Activated naive CD4-positive, alpha-beta T cell treated with anti-CD3 and anti-CD28 coated beads, Interleukin-2, amount 10 ng/mL, durations not matched to agents 7 days and 5 days (primary cell): ENCODE measurements at regions of chr17 and their contacts with region 1.

Region 1: GRCh38 chr17:48024937-48025906 is 12.4 kb downstream of the COPZ2 start:
- DNase-seq: peak; percentile 98
- H3K4me3 Mint-ChIP-seq: peak overlapping the region; percentile 81
- H3K27ac Mint-ChIP-seq: peak overlapping the region; percentile 89
- H3K4me1 Mint-ChIP-seq: peaks cover 42% of the 10 kb centered on the region
- H3K27me3 Mint-ChIP-seq: peaks cover 81% of the 10 kb centered on the region

Region 2: DNA sequence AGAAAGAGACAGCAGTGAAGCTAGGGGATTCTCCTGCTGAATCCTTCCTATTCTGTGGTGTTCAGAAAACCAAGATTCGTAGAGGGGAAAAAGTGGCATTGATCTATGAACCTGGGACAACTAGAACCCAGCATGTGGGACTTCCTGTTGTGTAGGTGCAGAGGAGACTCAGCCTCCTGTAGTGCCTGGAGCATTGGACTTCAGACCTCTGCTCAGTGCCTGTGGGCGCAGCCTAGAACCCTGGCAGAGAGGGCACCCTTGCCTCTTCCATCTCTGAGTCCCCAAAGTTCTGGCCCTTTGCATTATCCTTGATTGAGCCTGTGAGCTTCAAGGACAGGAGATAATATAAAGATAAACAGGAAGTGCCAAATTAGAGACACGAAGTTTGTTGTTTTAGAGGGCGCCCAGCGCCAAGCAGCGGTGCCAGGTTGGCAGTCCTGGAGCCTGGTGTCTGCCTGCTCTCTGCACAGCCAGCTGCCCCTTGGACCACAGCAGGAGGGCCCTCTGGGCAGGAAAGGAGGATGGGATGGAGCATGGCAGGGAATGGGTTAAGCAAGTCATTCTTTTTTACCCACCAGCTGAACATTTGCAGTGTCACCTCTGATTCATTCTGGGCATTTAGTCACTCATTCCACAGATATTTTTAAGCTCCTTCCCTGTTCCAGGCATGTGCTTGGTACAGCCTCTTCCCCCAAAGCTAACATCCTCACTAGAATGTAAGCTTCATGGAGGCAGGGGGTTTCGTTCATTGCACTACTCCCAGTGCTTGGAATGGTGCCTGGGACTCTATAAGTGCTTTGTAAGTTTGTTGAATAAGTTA is 162.4 kb before region 1 on chr17:
- CTCF ChIA-PET with region 1: no interaction called
- DNase-seq: no peak
- H3K4me3 Mint-ChIP-seq: no peak overlapping the region
- H3K27ac Mint-ChIP-seq: no peak overlapping the region
- H3K4me1 Mint-ChIP-seq: peaks cover 32% of the 10 kb centered on the region
- H3K27me3 Mint-ChIP-seq: peaks cover 63% of the 10 kb centered on the region

Region 3: GRCh38 chr17:47978324-47978723 is 46.9 kb before region 1 on chr17:
- CTCF ChIA-PET with region 1: interaction called, 15 read pairs
- DNase-seq: peak; percentile 69
- H3K4me3 Mint-ChIP-seq: no peak overlapping the region
- H3K27ac Mint-ChIP-seq: no peak overlapping the region
- H3K4me1 Mint-ChIP-seq: peaks cover 9% of the 10 kb centered on the region
- H3K27me3 Mint-ChIP-seq: no peaks in the 10 kb centered on the region

Region 4: GRCh38 chr17:48037036-48037837 is 12.0 kb after region 1 on chr17 and contains the start of gene COPZ2:
- CTCF ChIA-PET with region 1: interaction called, 20 read pairs
- DNase-seq: peak; percentile 77
- H3K4me3 Mint-ChIP-seq: peak within 1 kb of the TSS; percentile 77
- H3K27ac Mint-ChIP-seq: no peak within 1 kb of the TSS
- H3K4me1 Mint-ChIP-seq: peaks cover 21% of the 10 kb centered on the region
- H3K27me3 Mint-ChIP-seq: peaks cover 85% of the 10 kb centered on the region

Region 5: GRCh38 chr17:48047741-48048383 is 22.6 kb after region 1 on chr17 and contains the start of gene NFE2L1:
- CTCF ChIA-PET with region 1: interaction called, 15 read pairs
- DNase-seq: peak; percentile 99
- H3K4me3 Mint-ChIP-seq: peak within 1 kb of the TSS; percentile 97
- H3K27ac Mint-ChIP-seq: peak within 1 kb of the TSS; percentile 96
- H3K4me1 Mint-ChIP-seq: peaks cover 64% of the 10 kb centered on the region
- H3K27me3 Mint-ChIP-seq: peaks cover 14% of the 10 kb centered on the region

Region 6: GRCh38 chr17:48074315-48075081 is 49.3 kb after region 1 on chr17:
- CTCF ChIA-PET with region 1: interaction called, 115 read pairs
- DNase-seq: peak; percentile 87
- H3K4me3 Mint-ChIP-seq: no peak overlapping the region
- H3K27ac Mint-ChIP-seq: no peak overlapping the region
- H3K4me1 Mint-ChIP-seq: peaks cover 3% of the 10 kb centered on the region
- H3K27me3 Mint-ChIP-seq: no peaks in the 10 kb centered on the region

Region 7: DNA sequence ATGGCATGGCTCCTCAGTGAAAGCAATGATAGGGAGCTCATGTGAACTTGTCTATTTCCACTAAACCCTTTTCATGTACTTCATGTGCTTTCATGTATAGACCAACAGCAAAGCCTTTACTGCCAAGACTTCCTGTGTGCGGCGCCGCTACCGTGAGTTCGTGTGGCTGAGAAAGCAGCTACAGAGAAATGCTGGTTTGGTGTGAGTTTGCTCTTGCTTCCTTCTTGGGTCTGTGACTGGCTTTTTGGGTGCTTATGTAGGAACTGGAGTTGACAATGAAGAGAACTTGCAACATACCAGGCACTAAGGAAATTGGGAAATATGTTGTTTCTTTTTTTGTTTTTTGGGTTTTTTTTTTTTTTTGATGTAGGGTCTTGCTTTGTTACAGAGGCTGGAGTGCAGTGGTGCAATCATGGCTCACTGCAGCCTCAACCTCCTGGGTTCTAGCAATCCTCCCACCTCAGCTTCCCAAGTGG is 88.0 kb after region 1 on chr17:
- CTCF ChIA-PET with region 1: interaction called, 10 read pairs
- DNase-seq: peak; percentile 81
- H3K4me3 Mint-ChIP-seq: peak overlapping the region; percentile 38
- H3K27ac Mint-ChIP-seq: peak overlapping the region; percentile 97
- H3K4me1 Mint-ChIP-seq: peaks cover 44% of the 10 kb centered on the region
- H3K27me3 Mint-ChIP-seq: no peaks in the 10 kb centered on the region